CD4-positive, alpha-beta memory T cell (primary cell): ENCODE measurements at regions of chr3 and their contacts with region 1.

Region 1: GRCh38 chr3:36944012-36944640 is 728 bp downstream of the TRANK1 start:
- DNase-seq: peak; percentile 25 to 57 (median 34)
- H3K4me3 ChIP-seq: peak overlapping the region; percentile 21 to 80
- H3K4me3 Mint-ChIP-seq: peak overlapping the region; percentile 82 to 90 (median 86)
- H3K27ac ChIP-seq: peak overlapping the region; percentile 67
- H3K27ac Mint-ChIP-seq: peak overlapping the region; percentile 61 to 87 (median 80)
- H3K4me1 ChIP-seq: peaks cover 13% of the 10 kb centered on the region
- H3K4me1 Mint-ChIP-seq: peaks cover 7 to 43% (median 26%) of the 10 kb centered on the region in 4 donors
- H3K27me3 ChIP-seq: no peaks in the 10 kb centered on the region
- H3K27me3 Mint-ChIP-seq: no peaks in the 10 kb centered on the region

Region 2: GRCh38 chr3:36876181-36876936 is 67.8 kb before region 1 on chr3:
- CTCF ChIA-PET with region 1: interaction called, 4 read pairs
- POLR2A ChIA-PET with region 1: interaction called, 29 read pairs
- intact Hi-C with region 1: loop called (anchors 1 kb)
- DNase-seq: peak; percentile 66 to 81 (median 74)
- H3K4me3 ChIP-seq: peak overlapping the region; percentile 6 to 24
- H3K4me3 Mint-ChIP-seq: peak overlapping the region; percentile 63 to 85 (median 78)
- H3K27ac ChIP-seq: peak overlapping the region; percentile 71
- H3K27ac Mint-ChIP-seq: peak overlapping the region; percentile 83 to 97 (median 95)
- H3K4me1 ChIP-seq: peaks cover 48% of the 10 kb centered on the region
- H3K4me1 Mint-ChIP-seq: peaks cover 50 to 65% (median 54%) of the 10 kb centered on the region in 4 donors
- H3K27me3 ChIP-seq: no peaks in the 10 kb centered on the region
- H3K27me3 Mint-ChIP-seq: no peaks in the 10 kb centered on the region

Region 3: DNA sequence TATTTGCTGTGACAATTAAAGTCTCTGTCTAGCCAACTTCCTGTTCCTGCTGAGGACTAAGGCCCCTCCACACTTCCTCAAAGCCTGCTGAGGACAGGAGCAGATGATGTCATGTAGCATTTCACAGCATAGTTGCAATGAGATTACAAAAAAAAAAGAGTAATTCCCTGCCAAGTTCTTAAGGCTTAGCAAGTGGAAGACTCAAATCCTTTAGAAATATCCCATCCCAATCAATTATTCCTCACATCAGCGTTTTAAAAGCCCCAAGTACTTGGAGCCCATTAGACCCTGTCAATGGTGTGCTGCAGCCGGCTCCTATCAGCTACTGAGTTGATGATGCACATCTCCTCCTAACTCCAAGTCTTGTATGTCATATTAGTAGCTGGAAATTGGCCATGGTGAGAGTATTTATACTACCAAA is 51.0 kb before region 1 on chr3:
- CTCF ChIA-PET with region 1: interaction called, 3 read pairs
- POLR2A ChIA-PET with region 1: interaction called, 27 read pairs
- intact Hi-C with region 1: no loop called
- DNase-seq: peak; percentile 40 to 85 (median 56)
- H3K4me3 ChIP-seq: no peak overlapping the region
- H3K4me3 Mint-ChIP-seq: peak overlapping the region in 4 of 8 donors; percentile 1 to 65 (median 56)
- H3K27ac ChIP-seq: peak overlapping the region; percentile 43
- H3K27ac Mint-ChIP-seq: peak overlapping the region; percentile 79 to 97 (median 93)
- H3K4me1 ChIP-seq: peaks cover 46% of the 10 kb centered on the region
- H3K4me1 Mint-ChIP-seq: peaks cover 40 to 74% (median 55%) of the 10 kb centered on the region in 4 donors
- H3K27me3 ChIP-seq: no peaks in the 10 kb centered on the region
- H3K27me3 Mint-ChIP-seq: no peaks in the 10 kb centered on the region

Region 4: DNA sequence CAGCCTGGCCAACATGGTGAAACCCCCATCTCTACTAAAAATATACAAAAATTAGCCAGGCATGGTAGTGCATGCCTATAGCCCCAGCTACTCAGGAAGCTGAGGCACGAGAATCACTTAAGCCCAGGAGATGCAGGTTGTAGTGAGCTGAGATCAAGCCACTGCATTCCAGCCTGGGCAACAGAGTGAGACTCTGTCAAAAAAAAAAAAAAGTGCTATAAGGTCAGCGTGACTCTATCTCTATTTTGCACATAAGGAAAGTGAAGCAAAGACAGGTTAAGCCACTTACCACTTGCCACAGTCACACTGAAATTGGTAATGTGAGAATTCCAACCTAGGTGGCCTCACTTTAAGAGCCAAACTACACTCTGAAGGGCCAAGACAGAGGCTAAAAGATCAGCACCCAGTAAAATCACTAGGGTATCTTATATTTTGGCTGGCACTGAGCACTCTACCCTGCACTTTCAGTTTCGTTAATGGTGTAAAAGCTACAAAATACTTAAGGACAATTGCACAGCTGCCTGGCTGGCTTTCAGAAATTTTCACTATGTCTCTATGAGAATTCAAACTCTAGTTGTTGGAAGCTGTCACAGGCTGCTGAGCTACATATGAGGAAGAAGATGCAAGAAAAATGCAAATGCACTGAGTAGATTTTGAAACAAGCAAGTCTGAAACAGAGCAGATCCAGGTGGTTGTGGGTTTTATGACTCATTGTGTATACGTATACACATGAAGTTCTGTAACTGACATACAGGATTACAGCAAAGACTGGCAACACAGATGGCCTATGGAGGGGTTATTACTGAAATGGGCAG is 31.9 kb before region 1 on chr3:
- CTCF ChIA-PET with region 1: interaction called, 6 read pairs
- POLR2A ChIA-PET with region 1: interaction called, 43 read pairs
- intact Hi-C with region 1: loop called (anchors 1 kb)
- DNase-seq: peak; percentile 54 to 84 (median 65)
- H3K4me3 ChIP-seq: peak overlapping the region; percentile 18 to 41
- H3K4me3 Mint-ChIP-seq: peak overlapping the region; percentile 61 to 84 (median 79)
- H3K27ac ChIP-seq: peak overlapping the region; percentile 72
- H3K27ac Mint-ChIP-seq: peak overlapping the region; percentile 66 to 95 (median 84)
- H3K4me1 ChIP-seq: peaks cover 38% of the 10 kb centered on the region
- H3K4me1 Mint-ChIP-seq: peaks cover 24 to 43% (median 33%) of the 10 kb centered on the region in 4 donors
- H3K27me3 ChIP-seq: no peaks in the 10 kb centered on the region
- H3K27me3 Mint-ChIP-seq: no peaks in the 10 kb centered on the region

Region 5: DNA sequence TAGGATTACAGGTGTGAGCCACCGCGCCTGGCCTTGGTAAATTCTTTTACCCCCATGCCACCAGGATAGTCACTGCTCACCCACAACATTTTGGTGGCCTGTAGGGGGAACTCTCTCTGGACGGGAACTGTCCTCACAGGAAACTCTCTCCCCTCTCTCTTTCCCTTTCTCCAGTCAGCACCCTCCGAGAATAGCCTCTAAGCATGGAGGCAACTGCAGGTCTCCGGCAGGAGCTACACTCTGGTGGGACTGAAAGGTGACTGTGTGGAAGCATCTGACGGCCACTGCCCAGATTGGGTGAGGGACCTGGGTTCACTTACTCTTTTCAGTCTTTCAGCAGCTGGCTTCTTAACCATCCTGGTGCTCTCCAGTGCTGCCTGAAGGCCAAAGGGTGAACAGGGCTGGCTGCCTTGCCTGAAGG is 20.6 kb before region 1 on chr3:
- CTCF ChIA-PET with region 1: interaction called, 16 read pairs
- POLR2A ChIA-PET with region 1: interaction called, 13 read pairs
- intact Hi-C with region 1: no loop called
- DNase-seq: peak in 1 of 5 donors; percentile 25
- H3K4me3 ChIP-seq: no peak overlapping the region
- H3K4me3 Mint-ChIP-seq: peak overlapping the region in 2 of 8 donors; percentile 5 to 58
- H3K27ac ChIP-seq: no peak overlapping the region
- H3K27ac Mint-ChIP-seq: peak overlapping the region in 2 of 7 donors; percentile 6 to 64
- H3K4me1 ChIP-seq: peaks cover 4% of the 10 kb centered on the region
- H3K4me1 Mint-ChIP-seq: peaks cover 9 to 14% (median 11%) of the 10 kb centered on the region in 4 donors
- H3K27me3 ChIP-seq: no peaks in the 10 kb centered on the region
- H3K27me3 Mint-ChIP-seq: no peaks in the 10 kb centered on the region

Region 6: DNA sequence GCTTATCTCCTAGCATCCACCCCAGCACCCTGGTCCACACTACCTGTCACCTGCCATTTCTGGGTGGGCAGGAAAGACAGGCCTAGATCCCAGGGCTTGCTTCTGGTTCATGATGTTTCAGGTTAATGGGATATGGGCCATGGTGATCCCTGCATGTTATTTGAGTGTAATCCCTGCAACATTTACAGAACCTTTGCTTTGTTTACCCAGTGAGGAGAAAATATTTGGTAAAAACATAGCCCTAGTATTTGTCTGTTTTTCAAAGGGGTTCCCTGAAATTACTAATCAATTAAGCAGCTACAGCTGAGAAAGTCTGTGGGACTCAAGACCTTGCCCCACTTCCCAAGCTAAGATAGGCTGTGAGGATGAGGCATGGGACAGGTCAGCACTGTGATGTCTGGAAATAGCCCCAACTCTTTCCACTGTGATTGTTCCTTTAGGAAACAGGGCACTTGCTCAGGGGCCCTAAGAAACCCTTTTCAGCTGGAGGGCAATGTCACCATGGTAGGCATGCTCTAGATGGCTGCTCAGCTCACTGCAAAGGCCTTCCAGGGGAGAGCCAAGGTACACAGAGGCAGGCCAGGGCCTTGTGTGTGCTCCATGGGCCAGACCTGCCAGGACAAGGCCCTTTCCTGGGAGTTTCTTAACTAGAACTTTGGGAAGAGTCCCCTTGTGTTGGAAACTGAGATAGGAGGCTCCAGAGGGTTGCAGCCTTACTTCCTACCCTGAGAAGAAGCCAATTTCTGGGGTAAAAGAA is 10.4 kb before region 1 on chr3:
- CTCF ChIA-PET with region 1: interaction called, 3 read pairs
- POLR2A ChIA-PET with region 1: interaction called, 12 read pairs
- intact Hi-C with region 1: no loop called
- DNase-seq: no peak
- H3K4me3 ChIP-seq: no peak overlapping the region
- H3K4me3 Mint-ChIP-seq: no peak overlapping the region
- H3K27ac ChIP-seq: no peak overlapping the region
- H3K27ac Mint-ChIP-seq: no peak overlapping the region
- H3K4me1 ChIP-seq: no peaks in the 10 kb centered on the region
- H3K4me1 Mint-ChIP-seq: peaks cover 0 to 10% (median 1%) of the 10 kb centered on the region in 4 donors
- H3K27me3 ChIP-seq: no peaks in the 10 kb centered on the region
- H3K27me3 Mint-ChIP-seq: no peaks in the 10 kb centered on the region

Region 7: GRCh38 chr3:37014620-37015019 is 70.5 kb after region 1 on chr3:
- CTCF ChIA-PET with region 1: no interaction called
- POLR2A ChIA-PET with region 1: no interaction called
- intact Hi-C with region 1: no loop called
- DNase-seq: no peak
- H3K4me3 ChIP-seq: no peak overlapping the region
- H3K4me3 Mint-ChIP-seq: no peak overlapping the region
- H3K27ac ChIP-seq: no peak overlapping the region
- H3K27ac Mint-ChIP-seq: no peak overlapping the region
- H3K4me1 ChIP-seq: no peaks in the 10 kb centered on the region
- H3K4me1 Mint-ChIP-seq: peaks cover 0 to 2% (median 0%) of the 10 kb centered on the region in 4 donors
- H3K27me3 ChIP-seq: no peaks in the 10 kb centered on the region
- H3K27me3 Mint-ChIP-seq: no peaks in the 10 kb centered on the region

Region 8: DNA sequence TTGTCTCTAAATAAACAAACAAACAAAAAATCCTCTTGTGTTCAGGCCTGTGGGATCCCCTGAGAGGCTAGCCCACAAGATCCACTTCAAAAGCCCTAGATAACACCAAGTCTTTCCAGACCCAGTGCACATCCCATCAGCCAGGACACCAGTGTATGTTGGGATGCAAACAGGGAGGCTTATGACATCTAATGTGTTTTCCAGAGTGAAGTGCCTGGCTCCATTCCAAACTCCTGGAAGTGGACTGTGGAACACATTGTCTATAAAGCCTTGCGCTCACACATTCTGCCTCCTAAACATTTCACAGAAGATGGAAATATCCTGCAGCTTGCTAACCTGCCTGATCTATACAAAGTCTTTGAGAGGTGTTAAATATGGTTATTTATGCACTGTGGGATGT is 106.2 kb after region 1 on chr3:
- CTCF ChIA-PET with region 1: no interaction called
- POLR2A ChIA-PET with region 1: no interaction called
- intact Hi-C with region 1: no loop called
- DNase-seq: no peak
- H3K4me3 ChIP-seq: no peak overlapping the region
- H3K4me3 Mint-ChIP-seq: no peak overlapping the region
- H3K27ac ChIP-seq: no peak overlapping the region
- H3K27ac Mint-ChIP-seq: peak overlapping the region in 2 of 7 donors; percentile 32 to 37
- H3K4me1 ChIP-seq: no peaks in the 10 kb centered on the region
- H3K4me1 Mint-ChIP-seq: peaks cover 0 to 4% (median under 1%) of the 10 kb centered on the region in 4 donors
- H3K27me3 ChIP-seq: no peaks in the 10 kb centered on the region
- H3K27me3 Mint-ChIP-seq: no peaks in the 10 kb centered on the region